Activated T-helper 1 cell treated with anti-CD3 and anti-CD28 coated beads, Interleukin-12 subunit alpha, Interleukin-12 subunit beta, Interleukin-2, Interleukin-4 antibody, amounts not matched to agents 30 ng/mL and 10 ng/mL and 1 ng/mL, durations not matched to agents 14 hours and 24 hours and 36 hours (primary cell): ENCODE measurements at regions of chr20 and their contacts with region 1.

Region 1: DNA sequence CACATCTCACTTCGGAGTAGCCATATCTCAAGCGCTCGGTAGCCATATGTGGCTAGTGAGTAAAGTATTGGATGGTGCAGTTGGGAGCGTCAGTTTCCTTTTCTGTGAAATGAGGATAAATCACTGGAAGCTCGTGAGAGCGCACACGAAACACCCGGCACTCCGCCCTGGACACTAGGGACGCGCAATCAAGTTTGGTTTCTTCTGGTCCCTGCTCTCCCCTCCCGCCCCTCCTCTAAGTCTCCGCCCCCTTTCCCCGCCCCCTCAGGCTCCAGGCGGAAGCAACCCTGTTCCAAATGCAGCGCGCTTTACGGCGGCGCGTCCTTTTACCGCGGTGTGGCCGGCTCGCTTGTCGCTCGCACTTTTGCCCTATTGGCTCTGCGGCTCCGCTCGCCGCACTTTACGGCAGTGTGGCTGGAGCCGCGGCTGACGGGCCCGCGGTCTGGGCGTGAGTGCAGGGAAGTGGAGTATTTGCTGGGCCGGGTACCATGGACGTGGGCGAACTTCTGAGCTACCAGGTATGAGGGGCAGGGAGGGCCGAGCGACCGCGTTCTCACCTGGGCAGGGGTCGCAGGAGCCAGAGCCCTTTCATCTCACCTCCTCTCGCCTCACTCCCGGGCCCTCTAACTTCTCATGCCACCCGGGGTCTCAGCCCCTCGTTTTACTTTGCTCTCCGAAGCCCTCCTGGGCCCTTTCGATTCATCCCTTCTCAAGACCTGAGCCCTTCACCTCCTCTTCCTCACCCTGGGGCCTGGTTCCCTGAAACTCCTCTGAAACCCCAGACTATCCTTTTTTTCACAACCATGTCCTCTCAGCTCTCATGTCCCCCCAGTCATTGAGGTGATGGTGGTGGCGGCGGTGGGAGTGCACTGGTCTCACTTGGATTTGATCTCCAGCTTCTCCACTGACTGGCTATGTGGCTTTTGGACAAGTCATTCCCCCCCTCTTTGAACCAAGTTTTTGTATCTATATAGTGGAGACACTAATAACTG is at the start of gene CTNNBL1:
- DNase-seq: peak; percentile 95
- H3K4me3 Mint-ChIP-seq: peak within 1 kb of the TSS; percentile 96
- H3K27ac Mint-ChIP-seq: peak within 1 kb of the TSS; percentile 92
- H3K4me1 Mint-ChIP-seq: peaks cover 27% of the 10 kb centered on the region
- H3K27me3 Mint-ChIP-seq: peaks cover 7% of the 10 kb centered on the region
- total RNA-seq, gene CTNNBL1: 93.5 and 105 TPM in 2 replicates

Region 2: DNA sequence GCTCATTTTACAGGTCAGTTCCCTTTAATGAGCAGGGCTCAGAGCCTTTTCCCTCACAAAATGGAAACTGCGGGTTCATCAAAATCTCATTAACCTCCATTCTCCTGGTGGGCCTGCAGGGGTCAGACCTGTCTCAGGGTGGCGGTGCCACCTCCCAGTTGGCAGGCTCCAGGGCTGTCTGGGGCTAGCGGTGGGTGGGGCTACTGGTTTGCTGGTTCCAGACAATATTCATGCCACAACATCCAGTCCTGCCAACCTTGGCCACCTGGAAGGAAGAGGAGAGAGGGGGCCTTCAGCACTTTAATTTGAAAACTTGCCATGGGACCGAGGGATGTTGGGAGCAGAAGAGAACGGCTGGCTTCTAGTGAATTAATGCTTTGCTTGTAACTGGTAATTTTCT is 42.0 kb before region 1 on chr20:
- intact Hi-C with region 1: no loop called
- DNase-seq: no peak
- H3K4me3 Mint-ChIP-seq: no peak overlapping the region
- H3K27ac Mint-ChIP-seq: no peak overlapping the region
- H3K4me1 Mint-ChIP-seq: no peaks in the 10 kb centered on the region
- H3K27me3 Mint-ChIP-seq: peaks cover 6% of the 10 kb centered on the region

Region 3: GRCh38 chr20:37734228-37734985 is 40.5 kb after region 1 on chr20:
- intact Hi-C with region 1: loop called (anchors 2 kb)
- DNase-seq: no peak
- H3K4me3 Mint-ChIP-seq: peak overlapping the region; percentile 36
- H3K27ac Mint-ChIP-seq: peak overlapping the region; percentile 53
- H3K4me1 Mint-ChIP-seq: peaks cover 38% of the 10 kb centered on the region
- H3K27me3 Mint-ChIP-seq: no peaks in the 10 kb centered on the region